Heart right ventricle (tissue), 16 donors: ENCODE measurements at regions of chr18 and their contacts with region 1.

Region 1: DNA sequence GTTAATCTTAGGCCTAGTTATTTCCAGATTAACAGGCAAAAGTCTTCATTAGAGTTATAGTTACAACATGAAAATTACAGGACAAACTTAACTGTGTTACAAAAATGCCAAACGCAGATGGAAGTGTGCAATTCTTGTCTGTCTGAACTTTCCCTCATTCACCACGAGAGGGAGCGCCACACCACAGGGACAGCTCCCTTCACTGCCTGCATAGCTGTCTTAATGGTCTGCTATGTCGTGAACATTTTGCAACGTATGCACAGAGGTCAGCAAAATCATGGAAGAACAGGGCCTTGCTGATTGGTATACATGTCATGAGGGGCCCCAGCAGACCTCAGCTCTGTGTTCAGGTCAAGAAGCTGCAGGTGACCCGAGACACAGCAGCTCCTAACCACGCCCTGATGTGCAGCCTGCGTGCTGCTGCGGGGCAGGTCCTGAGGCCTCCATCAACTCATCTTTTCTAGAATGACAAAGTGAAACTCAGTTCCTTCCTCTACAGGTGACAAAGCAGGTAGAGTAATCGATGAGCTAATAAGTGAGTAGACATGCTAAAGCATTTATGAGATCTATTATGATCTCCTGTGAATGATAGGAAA is 78.8 kb upstream of the ATP8B1 start:
- DNase-seq: peak; percentile 19 to 75
- ATAC-seq: peak in 7 of 8 donors; percentile 77 to 92 (median 89)
- H3K4me3 ChIP-seq: no peak overlapping the region
- H3K27ac ChIP-seq: no peak overlapping the region
- H3K4me1 ChIP-seq: peaks cover 0 to 4% (median 0%) of the 10 kb centered on the region in 9 donors
- H3K27me3 ChIP-seq: no peaks in the 10 kb centered on the region
- CTCF ChIP-seq: peak; percentile 69 to 93 (median 89)

Region 2: DNA sequence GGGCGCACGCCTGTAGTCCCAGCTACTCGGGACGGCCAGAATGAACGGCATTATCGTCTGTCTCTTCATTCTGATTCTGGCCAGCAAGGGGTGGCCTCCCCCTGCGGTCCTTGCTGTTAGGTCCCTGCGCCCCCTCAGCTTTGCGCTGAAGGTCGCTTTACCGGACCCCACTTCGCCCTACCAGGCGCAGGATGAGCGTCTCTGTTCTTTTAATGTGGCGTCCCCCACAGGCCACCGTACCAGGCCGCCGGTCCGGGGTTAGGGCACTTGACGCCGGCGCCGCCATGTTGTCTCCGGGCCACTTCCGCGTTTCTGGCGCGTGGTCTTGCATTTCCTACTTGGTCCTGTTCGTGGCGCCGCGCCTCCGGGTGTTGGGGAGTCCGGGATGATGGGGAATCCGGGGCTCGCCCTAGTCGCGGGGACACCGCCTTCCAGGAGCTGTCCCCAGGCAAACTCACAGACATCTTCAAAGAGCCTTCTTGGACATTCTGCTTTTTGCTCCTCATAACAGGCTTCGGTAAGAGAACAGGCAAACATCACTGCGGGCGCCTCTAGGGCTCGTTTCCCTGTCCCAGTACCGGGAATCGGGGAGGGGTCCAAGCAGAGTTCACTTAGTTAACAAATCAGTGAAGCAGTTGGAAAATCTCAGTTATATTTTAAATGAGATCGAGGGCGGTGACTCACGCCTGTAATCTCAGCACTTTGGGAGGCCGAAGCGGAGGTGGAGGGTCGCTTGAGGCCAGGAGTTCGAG is 251.7 kb before region 1 on chr18:
- intact Hi-C with region 1: loop called in 2 of 10 experiments (anchors 5 kb)
- DNase-seq: peak; percentile 97
- ATAC-seq: peak; percentile 97 to 100 (median 99)
- H3K4me3 ChIP-seq: peak overlapping the region; percentile 50 to 77 (median 64)
- H3K27ac ChIP-seq: peak overlapping the region in 9 of 10 donors; percentile 71 to 91 (median 77)
- H3K4me1 ChIP-seq: peaks cover 0 to 19% (median 7%) of the 10 kb centered on the region in 9 donors
- H3K27me3 ChIP-seq: no peaks in the 10 kb centered on the region
- CTCF ChIP-seq: peak; percentile 39 to 92 (median 78)

Region 3: GRCh38 chr18:57649556-57650500 is 232.1 kb before region 1 on chr18:
- intact Hi-C with region 1: loop called in 2 of 10 experiments (anchors 10 kb)
- DNase-seq: no peak
- ATAC-seq: peak in 5 of 8 donors; percentile 35 to 84 (median 65)
- H3K4me3 ChIP-seq: no peak overlapping the region
- H3K27ac ChIP-seq: peak overlapping the region in 5 of 10 donors; percentile 15 to 72 (median 32)
- H3K4me1 ChIP-seq: peaks cover 0 to 18% (median 0%) of the 10 kb centered on the region in 9 donors
- H3K27me3 ChIP-seq: no peaks in the 10 kb centered on the region
- CTCF ChIP-seq: no peak

Region 4: DNA sequence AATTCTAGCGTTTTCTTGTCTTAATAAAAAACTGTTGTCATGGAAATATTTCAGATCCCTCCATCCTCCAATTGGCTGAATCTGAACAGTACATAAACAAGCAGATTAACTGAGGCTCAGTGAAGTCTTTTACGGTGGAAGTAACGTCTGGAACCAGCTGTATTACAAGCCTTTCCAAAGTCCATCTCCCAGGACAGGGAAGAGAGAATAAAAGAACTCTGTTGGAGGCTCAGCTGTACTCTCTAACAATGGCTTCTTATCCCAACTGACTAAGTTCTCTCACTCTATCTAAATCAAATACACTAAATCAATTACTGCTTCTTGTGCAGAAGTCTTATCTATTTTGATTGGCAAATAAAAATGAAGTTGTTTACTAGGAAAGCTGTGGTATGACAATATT is 142.2 kb after region 1 on chr18:
- intact Hi-C with region 1: loop called in 1 of 10 experiments (anchors 10 kb)
- DNase-seq: no peak
- ATAC-seq: no peak
- H3K4me3 ChIP-seq: no peak overlapping the region
- H3K27ac ChIP-seq: no peak overlapping the region
- H3K4me1 ChIP-seq: no peaks in the 10 kb centered on the region
- H3K27me3 ChIP-seq: peaks cover 0 to 8% (median 0%) of the 10 kb centered on the region in 7 donors
- CTCF ChIP-seq: no peak

Region 5: GRCh38 chr18:58117786-58118403 is 236.0 kb after region 1 on chr18:
- intact Hi-C with region 1: loop called (anchors 2 to 5 kb)
- DNase-seq: no peak
- ATAC-seq: peak in 7 of 8 donors; percentile 25 to 66 (median 55)
- H3K4me3 ChIP-seq: no peak overlapping the region
- H3K27ac ChIP-seq: no peak overlapping the region
- H3K4me1 ChIP-seq: peaks cover 0 to 8% (median 0%) of the 10 kb centered on the region in 9 donors
- H3K27me3 ChIP-seq: no peaks in the 10 kb centered on the region
- CTCF ChIP-seq: no peak